ENCODE measurements at regions of chr2 and their contacts with region 1.

Region 1: DNA sequence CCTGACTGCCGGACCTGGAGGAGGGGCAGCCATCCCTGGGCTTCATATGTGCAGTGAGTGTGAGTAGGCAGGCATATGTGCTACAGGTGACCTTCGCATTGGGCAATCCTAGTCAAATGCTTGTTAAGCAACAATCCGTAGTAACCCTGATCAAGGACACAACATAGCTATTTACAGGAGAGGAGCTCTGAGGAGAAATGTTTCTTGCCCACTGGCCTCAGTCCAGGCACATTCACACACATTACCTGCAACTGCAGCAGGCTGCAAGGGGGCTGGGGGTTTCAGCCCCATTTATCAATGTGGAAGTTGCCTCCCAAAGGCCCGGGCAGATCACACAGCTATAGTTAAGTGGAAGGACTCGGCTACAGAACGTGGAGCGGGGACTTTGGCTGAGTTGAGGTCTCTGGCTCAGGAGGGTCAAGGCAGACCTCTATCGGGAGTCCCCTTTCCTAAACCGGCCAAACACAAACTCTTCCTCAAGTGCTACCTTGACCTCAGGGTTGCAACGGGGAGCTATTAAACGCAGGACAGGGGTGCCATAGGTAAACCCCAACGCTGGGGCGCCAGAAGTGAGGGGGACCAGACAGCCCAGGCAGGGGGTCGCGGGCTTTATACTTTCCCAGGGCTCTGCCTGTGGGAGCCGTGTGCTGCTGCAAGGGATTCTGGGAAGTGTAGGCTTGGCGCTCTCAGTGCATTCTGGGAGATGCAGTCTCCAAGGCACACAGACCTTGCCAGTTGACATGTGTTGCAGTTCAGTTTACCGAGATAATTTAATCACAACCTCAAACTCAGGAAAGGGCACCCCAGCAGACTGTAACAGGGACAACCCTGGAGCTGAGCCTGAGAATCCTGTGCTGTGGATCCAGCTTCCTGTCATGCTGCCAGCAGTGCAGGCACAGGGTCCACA is 9.4 kb downstream of the KHK start:
- H3K4me3 Mint-ChIP-seq: peak overlapping the region; percentile 70
- H3K27ac Mint-ChIP-seq: peak overlapping the region; percentile 97
- H3K4me1 Mint-ChIP-seq: peaks cover 23% of the 10 kb centered on the region
- H3K27me3 Mint-ChIP-seq: no peaks in the 10 kb centered on the region

Region 2: GRCh38 chr2:27078267-27079194 is 17.5 kb before region 1 on chr2 and contains the start of gene EMILIN1:
- intact Hi-C with region 1: no loop called
- H3K4me3 Mint-ChIP-seq: peak within 1 kb of the TSS; percentile 64
- H3K27ac Mint-ChIP-seq: peak within 1 kb of the TSS; percentile 66
- H3K4me1 Mint-ChIP-seq: peaks cover 76% of the 10 kb centered on the region
- H3K27me3 Mint-ChIP-seq: peaks cover 9% of the 10 kb centered on the region

Region 3: DNA sequence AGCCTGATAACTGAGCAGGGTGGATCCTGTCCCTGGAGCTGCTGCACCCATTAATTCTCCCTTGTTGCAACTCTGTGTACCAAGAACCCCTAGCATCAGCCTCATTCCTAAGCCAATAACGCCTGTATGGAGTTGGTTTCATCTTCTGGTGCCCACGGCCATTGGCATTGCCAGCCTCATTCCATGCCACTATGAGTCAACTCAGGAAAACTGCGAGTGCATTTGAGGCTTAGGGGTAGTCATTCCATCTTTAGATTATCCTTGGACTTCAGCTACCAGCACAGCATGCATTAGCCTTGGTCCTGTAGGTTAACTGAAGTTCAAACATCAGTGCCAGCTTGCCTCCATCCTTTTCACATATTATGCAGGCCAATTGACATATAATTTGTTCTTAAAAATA is 184.8 kb after region 1 on chr2:
- intact Hi-C with region 1: loop called (anchors 1 kb)
- H3K4me3 Mint-ChIP-seq: no peak overlapping the region
- H3K27ac Mint-ChIP-seq: no peak overlapping the region
- H3K4me1 Mint-ChIP-seq: peaks cover 10% of the 10 kb centered on the region
- H3K27me3 Mint-ChIP-seq: peaks cover 23% of the 10 kb centered on the region

Region 4: GRCh38 chr2:27303093-27304025 is 207.4 kb after region 1 on chr2:
- intact Hi-C with region 1: loop called (anchors 2 kb)
- H3K4me3 Mint-ChIP-seq: peak overlapping the region; percentile 66
- H3K27ac Mint-ChIP-seq: no peak overlapping the region
- H3K4me1 Mint-ChIP-seq: peaks cover 15% of the 10 kb centered on the region
- H3K27me3 Mint-ChIP-seq: peaks cover 42% of the 10 kb centered on the region

Measured in dendritic cell treated with granulocyte-macrophage colony-stimulating factor and Interleukin-4, amounts not matched to agents 40 ng/mL and 50 ng/mL, for 4 days (primary cell).